HepG2 (cell line): ENCODE measurements at regions of chr18 and their contacts with region 1.

Region 1: GRCh38 chr18:22637787-22638186 is 220.1 kb upstream of the CTAGE1 start:
- DNase-seq: peak; percentile 42
- ATAC-seq: peak; percentile 71
- H3K4me3 ChIP-seq: no peak overlapping the region
- H3K27ac ChIP-seq: no peak overlapping the region
- H3K4me1 ChIP-seq: peaks cover 25% of the 10 kb centered on the region
- H3K27me3 ChIP-seq: no peaks in the 10 kb centered on the region
- CTCF ChIP-seq: no peak
- EP300 ChIP-seq: no peak
- POLR2A ChIP-seq: no peak
- RAD21 ChIP-seq: no peak

Region 2: GRCh38 chr18:22650247-22650646 is 12.5 kb after region 1 on chr18:
- CTCF ChIA-PET with region 1: no interaction called
- POLR2A ChIA-PET with region 1: no interaction called
- in situ Hi-C with region 1: no loop called
- intact Hi-C with region 1: no loop called
- DNase-seq: no peak
- ATAC-seq: no peak
- H3K4me3 ChIP-seq: no peak overlapping the region
- H3K27ac ChIP-seq: no peak overlapping the region
- H3K4me1 ChIP-seq: no peaks in the 10 kb centered on the region
- H3K27me3 ChIP-seq: no peaks in the 10 kb centered on the region
- CTCF ChIP-seq: no peak
- EP300 ChIP-seq: no peak
- POLR2A ChIP-seq: no peak
- RAD21 ChIP-seq: no peak

Region 3: DNA sequence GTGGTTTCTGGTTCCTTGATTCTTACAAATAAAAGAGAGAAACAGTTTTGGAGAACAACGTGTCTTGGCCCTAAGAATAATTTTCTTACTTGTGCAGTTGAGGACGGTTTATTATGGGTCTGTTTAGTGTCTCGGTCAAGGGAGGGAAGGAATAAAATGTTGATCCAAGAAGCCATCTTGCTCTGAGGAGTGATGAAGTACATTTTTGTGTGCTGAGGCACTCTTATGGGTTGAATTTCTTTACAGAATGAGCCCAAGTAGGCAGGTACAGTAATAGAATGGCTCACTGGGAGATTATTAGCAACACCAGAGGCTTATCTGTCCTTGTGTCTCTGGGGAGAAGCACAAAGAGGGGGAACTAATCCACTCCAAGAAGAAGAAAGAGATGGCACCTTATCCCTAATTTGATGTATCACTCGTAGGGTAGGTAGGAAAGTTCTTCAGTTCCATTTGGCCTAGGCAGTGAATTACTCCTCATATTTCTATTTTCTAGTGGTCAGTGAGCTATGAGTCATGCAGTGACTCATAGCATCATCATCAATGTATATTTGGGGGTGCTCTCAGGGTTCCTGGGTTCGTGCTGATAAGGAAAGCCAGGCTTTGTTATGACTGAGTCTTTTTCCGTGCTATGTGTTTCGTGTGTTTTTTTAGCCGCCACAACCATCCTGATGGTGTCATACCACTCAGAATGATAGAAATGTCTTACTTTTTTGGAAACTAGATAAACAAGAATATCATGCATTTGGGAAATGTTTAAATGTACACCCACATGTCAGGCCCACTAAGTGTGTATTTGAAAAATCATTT is 30.0 kb after region 1 on chr18:
- CTCF ChIA-PET with region 1: no interaction called
- POLR2A ChIA-PET with region 1: no interaction called
- in situ Hi-C with region 1: no loop called
- intact Hi-C with region 1: loop called (anchors 1 kb)
- DNase-seq: no peak
- ATAC-seq: no peak
- H3K4me3 ChIP-seq: no peak overlapping the region
- H3K27ac ChIP-seq: no peak overlapping the region
- H3K4me1 ChIP-seq: no peaks in the 10 kb centered on the region
- H3K27me3 ChIP-seq: no peaks in the 10 kb centered on the region
- CTCF ChIP-seq: no peak
- EP300 ChIP-seq: no peak
- POLR2A ChIP-seq: no peak
- RAD21 ChIP-seq: no peak